Right cardiac atrium (tissue), 5 donors: ENCODE measurements at regions of chr17 and their contacts with region 1.

Region 1: GRCh38 chr17:49843774-49844350 is 4.0 kb downstream of the TAC4 start:
- DNase-seq: no peak
- ATAC-seq: no peak
- H3K4me3 ChIP-seq: no peak overlapping the region
- H3K27ac ChIP-seq: no peak overlapping the region
- H3K4me1 ChIP-seq: peaks cover 7% of the 10 kb centered on the region
- H3K27me3 ChIP-seq: no peaks in the 10 kb centered on the region

Region 2: GRCh38 chr17:49798182-49798581 is 45.7 kb before region 1 on chr17:
- intact Hi-C with region 1: loop called in 1 of 4 experiments (anchors 10 kb)
- DNase-seq: no peak
- ATAC-seq: peak; percentile 15 to 32
- H3K4me3 ChIP-seq: no peak overlapping the region
- H3K27ac ChIP-seq: peak overlapping the region; percentile 67
- H3K4me1 ChIP-seq: peaks cover 1% of the 10 kb centered on the region
- H3K27me3 ChIP-seq: no peaks in the 10 kb centered on the region